Natural killer cell (primary cell): ENCODE measurements at regions of chr6 and their contacts with region 1.

Region 1: GRCh38 chr6:27838058-27838944 is 73.9 kb downstream of the OR2B2 start:
- DNase-seq: peak; percentile 78 to 97
- ATAC-seq: peak; percentile 66 to 86 (median 79)
- H3K4me3 ChIP-seq: peak overlapping the region; percentile 82
- H3K4me3 Mint-ChIP-seq: no peak overlapping the region
- H3K27ac ChIP-seq: peak overlapping the region; percentile 98
- H3K27ac Mint-ChIP-seq: no peak overlapping the region
- H3K4me1 ChIP-seq: peaks cover 32% of the 10 kb centered on the region
- H3K4me1 Mint-ChIP-seq: peaks cover 6 to 7% of the 10 kb centered on the region in 2 donors
- H3K27me3 ChIP-seq: no peaks in the 10 kb centered on the region
- H3K27me3 Mint-ChIP-seq: no peaks in the 10 kb centered on the region
- CTCF ChIP-seq: no peak

Region 2: DNA sequence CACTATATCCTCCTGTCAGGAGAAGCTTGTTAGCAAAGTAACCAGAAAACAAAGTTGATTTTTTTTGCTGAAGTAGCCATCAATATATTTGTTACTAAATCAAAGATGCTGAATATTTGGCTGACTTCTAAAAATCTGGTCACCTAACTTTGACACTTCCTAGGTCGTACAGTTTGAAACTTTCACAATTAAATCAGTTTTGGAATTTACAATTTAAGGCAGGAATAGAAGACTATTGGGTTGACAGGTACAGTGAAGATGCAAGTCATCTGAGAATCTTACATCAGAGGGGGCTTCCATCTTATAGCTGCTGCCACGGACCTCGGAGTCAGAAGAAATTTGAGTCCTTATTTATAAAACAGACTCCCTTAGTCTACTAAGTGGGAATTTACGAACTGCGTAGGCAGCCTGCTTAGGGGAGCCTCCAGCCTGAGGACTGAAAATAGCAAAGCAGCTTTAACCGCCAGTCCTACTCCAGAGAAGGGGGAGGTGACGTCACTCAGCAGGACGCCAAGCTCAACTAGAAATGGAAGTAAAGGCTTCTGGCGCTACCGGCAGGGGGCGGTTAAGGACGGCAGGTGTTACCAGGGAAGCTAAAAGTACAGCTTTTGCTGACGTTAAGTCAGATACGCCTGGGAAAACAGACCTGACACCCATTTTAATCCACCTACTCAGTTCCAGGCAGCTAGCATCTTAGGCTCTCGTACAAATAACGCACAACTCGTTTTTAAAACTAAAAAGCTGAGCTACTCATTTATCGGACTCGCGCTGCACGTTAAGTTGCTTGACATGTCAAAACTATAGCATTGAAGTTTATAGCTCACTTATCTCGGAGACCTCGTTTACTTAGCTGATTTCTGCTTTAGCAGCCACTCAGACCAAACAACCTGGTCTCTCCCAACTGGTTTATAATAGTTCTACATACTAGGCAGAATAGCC is 1812.1 kb before region 1 on chr6:
- intact Hi-C with region 1: loop called (anchors 10 kb)
- DNase-seq: peak; percentile 86 to 98
- ATAC-seq: peak; percentile 41 to 60 (median 44)
- H3K4me3 ChIP-seq: peak overlapping the region; percentile 52
- H3K4me3 Mint-ChIP-seq: peak overlapping the region; percentile 87
- H3K27ac ChIP-seq: peak overlapping the region; percentile 96
- H3K27ac Mint-ChIP-seq: peak overlapping the region; percentile 99 to 100
- H3K4me1 ChIP-seq: peaks cover 22% of the 10 kb centered on the region
- H3K4me1 Mint-ChIP-seq: peaks cover 38 to 42% of the 10 kb centered on the region in 2 donors
- H3K27me3 ChIP-seq: no peaks in the 10 kb centered on the region
- H3K27me3 Mint-ChIP-seq: peaks cover 0 to 2% of the 10 kb centered on the region in 2 donors
- CTCF ChIP-seq: peak; percentile 80

Region 3: GRCh38 chr6:27146706-27147505 is 691.4 kb before region 1 on chr6:
- intact Hi-C with region 1: loop called (anchors 1 kb)
- DNase-seq: peak; percentile 74 to 97
- ATAC-seq: peak; percentile 76 to 88 (median 82)
- H3K4me3 ChIP-seq: peak overlapping the region; percentile 74
- H3K4me3 Mint-ChIP-seq: no peak overlapping the region
- H3K27ac ChIP-seq: peak overlapping the region; percentile 88
- H3K27ac Mint-ChIP-seq: no peak overlapping the region
- H3K4me1 ChIP-seq: peaks cover 23% of the 10 kb centered on the region
- H3K4me1 Mint-ChIP-seq: peaks cover 0 to 3% of the 10 kb centered on the region in 2 donors
- H3K27me3 ChIP-seq: no peaks in the 10 kb centered on the region
- H3K27me3 Mint-ChIP-seq: no peaks in the 10 kb centered on the region
- CTCF ChIP-seq: no peak

Region 4: DNA sequence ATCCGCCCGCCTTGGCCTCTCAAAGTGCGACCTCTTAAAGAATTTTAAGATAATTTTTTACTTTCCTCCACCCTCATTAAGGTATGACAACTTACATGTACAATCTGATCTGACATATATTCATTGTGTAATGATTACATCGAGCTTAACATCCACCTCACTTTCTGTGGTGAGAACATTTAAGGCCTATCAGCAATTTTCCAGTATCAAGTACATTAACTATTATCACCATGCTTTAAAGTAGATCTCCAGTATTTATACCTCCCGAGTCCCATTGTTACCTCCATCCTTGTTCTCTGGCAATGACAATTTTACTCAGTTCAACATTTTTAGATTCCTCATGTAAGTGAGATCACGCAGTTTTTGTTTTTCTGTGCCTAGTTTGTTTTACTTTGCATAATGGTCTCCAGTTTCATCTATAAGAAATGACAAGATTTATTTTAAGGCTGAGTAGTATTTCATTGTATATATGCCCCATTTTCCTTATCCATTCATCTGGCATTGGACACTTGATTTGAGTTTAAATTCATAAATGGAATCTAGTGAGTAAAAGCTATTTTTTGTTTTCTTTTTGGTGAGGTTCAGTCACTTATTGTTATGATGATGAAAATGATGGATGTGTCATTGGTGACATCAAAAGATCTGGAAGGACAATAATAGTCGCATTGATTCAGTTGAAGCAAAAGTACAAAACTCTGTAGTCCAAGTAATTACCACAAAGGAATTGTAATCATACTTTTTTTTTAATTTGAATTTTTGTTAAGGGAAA is 13.1 kb before region 1 on chr6:
- intact Hi-C with region 1: loop called (anchors 2 kb)
- DNase-seq: peak in 1 of 2 donors; percentile 40
- ATAC-seq: no peak
- H3K4me3 ChIP-seq: peak overlapping the region; percentile 51
- H3K4me3 Mint-ChIP-seq: peak overlapping the region; percentile 94
- H3K27ac ChIP-seq: peak overlapping the region; percentile 82
- H3K27ac Mint-ChIP-seq: peak overlapping the region; percentile 95 to 99
- H3K4me1 ChIP-seq: peaks cover 10% of the 10 kb centered on the region
- H3K4me1 Mint-ChIP-seq: peaks cover 32 to 34% of the 10 kb centered on the region in 2 donors
- H3K27me3 ChIP-seq: no peaks in the 10 kb centered on the region
- H3K27me3 Mint-ChIP-seq: no peaks in the 10 kb centered on the region
- CTCF ChIP-seq: no peak

Region 5: DNA sequence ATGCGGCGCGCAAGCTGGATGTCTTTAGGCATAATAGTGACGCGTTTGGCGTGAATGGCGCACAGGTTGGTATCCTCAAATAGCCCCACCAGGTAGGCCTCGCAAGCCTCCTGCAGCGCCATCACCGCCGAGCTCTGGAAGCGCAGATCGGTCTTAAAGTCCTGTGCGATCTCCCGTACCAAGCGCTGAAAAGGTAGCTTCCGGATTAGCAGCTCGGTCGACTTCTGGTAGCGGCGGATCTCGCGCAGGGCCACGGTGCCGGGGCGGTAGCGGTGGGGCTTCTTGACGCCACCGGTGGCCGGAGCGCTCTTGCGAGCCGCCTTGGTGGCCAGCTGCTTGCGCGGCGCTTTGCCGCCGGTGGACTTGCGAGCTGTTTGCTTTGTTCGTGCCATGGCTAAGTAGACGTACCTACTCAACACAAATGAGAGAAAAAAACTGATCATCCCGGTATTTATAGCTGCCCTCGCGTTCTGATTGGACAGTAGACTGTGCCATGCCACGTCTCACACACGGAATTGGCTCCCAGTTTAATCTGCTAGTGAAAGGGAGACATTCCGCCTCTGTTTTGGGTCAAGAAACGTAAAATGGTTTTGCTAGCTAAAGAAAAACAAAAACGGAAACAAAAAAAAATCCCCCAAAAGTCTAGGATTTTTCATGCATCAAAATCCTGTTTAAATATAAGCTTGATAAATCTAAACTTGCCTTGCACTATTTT is 33.8 kb after region 1 on chr6:
- intact Hi-C with region 1: loop called (anchors 1 kb)
- DNase-seq: peak; percentile 76 to 97
- ATAC-seq: peak; percentile 73 to 82 (median 78)
- H3K4me3 ChIP-seq: peak overlapping the region; percentile 68
- H3K4me3 Mint-ChIP-seq: peak overlapping the region; percentile 99
- H3K27ac ChIP-seq: peak overlapping the region; percentile 95
- H3K27ac Mint-ChIP-seq: peak overlapping the region; percentile 100
- H3K4me1 ChIP-seq: peaks cover 32% of the 10 kb centered on the region
- H3K4me1 Mint-ChIP-seq: peaks cover 44 to 50% of the 10 kb centered on the region in 2 donors
- H3K27me3 ChIP-seq: no peaks in the 10 kb centered on the region
- H3K27me3 Mint-ChIP-seq: no peaks in the 10 kb centered on the region
- CTCF ChIP-seq: no peak

Region 6: GRCh38 chr6:28895134-28895812 is 1057.0 kb after region 1 on chr6:
- intact Hi-C with region 1: loop called (anchors 10 kb)
- DNase-seq: peak; percentile 84 to 96
- ATAC-seq: peak; percentile 66 to 84 (median 74)
- H3K4me3 ChIP-seq: peak overlapping the region; percentile 72
- H3K4me3 Mint-ChIP-seq: peak overlapping the region; percentile 97
- H3K27ac ChIP-seq: peak overlapping the region; percentile 96
- H3K27ac Mint-ChIP-seq: peak overlapping the region; percentile 99
- H3K4me1 ChIP-seq: peaks cover 13% of the 10 kb centered on the region
- H3K4me1 Mint-ChIP-seq: peaks cover 24 to 25% of the 10 kb centered on the region in 2 donors
- H3K27me3 ChIP-seq: no peaks in the 10 kb centered on the region
- H3K27me3 Mint-ChIP-seq: no peaks in the 10 kb centered on the region
- CTCF ChIP-seq: no peak